Thyroid gland (tissue), 4 donors: ENCODE measurements at regions of chr6 and their contacts with region 1.

Region 1: GRCh38 chr6:149834513-149835481 is 29.4 kb downstream of the LRP11 start:
- DNase-seq: peak; percentile 58 to 63
- H3K4me3 ChIP-seq: no peak overlapping the region
- H3K27ac ChIP-seq: no peak overlapping the region
- H3K4me1 ChIP-seq: no peaks in the 10 kb centered on the region
- H3K27me3 ChIP-seq: no peaks in the 10 kb centered on the region
- CTCF ChIP-seq: peak; percentile 83 to 96 (median 90)
- POLR2A ChIP-seq: no peak

Region 2: DNA sequence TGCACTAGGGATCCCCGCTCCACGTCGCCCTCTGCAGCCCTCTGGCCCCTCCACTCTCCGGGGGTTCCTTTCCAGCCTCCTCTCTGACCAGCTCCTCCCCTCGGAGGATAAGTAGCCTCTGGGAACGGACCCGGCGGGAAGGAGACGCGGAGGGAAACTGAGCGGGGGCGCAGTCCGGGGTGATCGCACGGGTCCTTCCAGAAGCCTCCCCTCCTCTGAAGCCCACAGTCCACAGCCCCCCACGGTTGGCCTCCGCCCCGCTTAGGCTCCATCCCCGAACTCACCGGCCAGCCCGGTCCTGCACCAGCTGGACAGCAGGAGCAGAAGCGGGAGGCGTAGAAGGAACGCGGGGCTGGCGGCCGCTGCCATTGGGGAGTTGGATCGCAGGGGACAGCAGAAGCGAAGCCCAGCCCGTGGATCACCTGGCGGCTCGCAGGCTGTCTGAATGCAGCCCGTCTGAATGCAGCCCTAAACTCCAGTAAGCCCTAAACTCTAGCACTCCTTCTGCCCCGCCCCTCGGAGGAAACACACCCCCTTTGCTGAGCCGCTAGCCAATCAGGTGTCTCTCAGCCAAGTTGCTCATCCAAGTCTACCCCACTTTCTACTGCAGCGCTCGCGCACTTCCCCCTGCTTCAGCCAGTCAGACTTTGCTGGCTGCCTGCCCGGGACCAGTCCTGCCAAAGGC is 88.0 kb after region 1 on chr6 and contains the start of gene RAET1G:
- intact Hi-C with region 1: loop called (anchors 2 kb)
- DNase-seq: peak; percentile 95
- H3K4me3 ChIP-seq: peak within 1 kb of the TSS; percentile 28 to 43 (median 35)
- H3K27ac ChIP-seq: peak within 1 kb of the TSS in 1 of 3 donors; percentile 43
- H3K4me1 ChIP-seq: peaks cover 4 to 25% of the 10 kb centered on the region in 2 donors
- H3K27me3 ChIP-seq: no peaks in the 10 kb centered on the region
- CTCF ChIP-seq: no peak
- POLR2A ChIP-seq: peak in 1 of 2 donors; percentile 74
- total RNA-seq, gene RAET1G: 0.59 to 2.0 (median 1.6) TPM in 3 of 4 donors, not detected in the other